Gastrocnemius medialis (tissue), 4 donors: ENCODE measurements at regions of chr9 and their contacts with region 1.

Region 1: GRCh38 chr9:128927731-128928411 is 7.1 kb downstream of the PHYHD1 start:
- DNase-seq: peak in 1 of 2 donors; percentile 50
- ATAC-seq: peak; percentile 68 to 81
- H3K4me3 ChIP-seq: no peak overlapping the region
- H3K27ac ChIP-seq: peak overlapping the region in 3 of 4 donors; percentile 32 to 44 (median 33)
- H3K4me1 ChIP-seq: peaks cover 7 to 10% of the 10 kb centered on the region in 2 donors
- H3K27me3 ChIP-seq: no peaks in the 10 kb centered on the region
- CTCF ChIP-seq: peak; percentile 75 to 93 (median 91)
- POLR2A ChIP-seq: no peak

Region 2: DNA sequence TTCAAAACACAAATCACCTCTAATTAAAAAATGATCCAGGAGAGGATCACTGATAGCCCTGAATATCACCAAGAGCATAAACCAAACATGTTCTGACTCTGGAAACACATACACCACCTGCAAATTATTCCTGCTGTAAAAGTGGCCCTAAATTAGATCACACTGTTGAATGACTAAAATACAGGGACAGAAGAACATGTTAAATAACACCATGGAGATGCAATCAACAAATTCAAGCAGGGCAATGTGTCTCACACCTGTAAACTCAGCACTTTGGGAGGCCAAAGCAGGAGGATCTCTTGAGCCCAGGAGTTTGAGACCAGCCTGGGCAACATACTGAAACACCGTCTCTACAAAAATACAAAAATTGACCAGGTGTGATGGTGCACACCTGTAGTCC is 80.1 kb before region 1 on chr9:
- in situ Hi-C with region 1: no loop called
- intact Hi-C with region 1: loop called (anchors 1 kb)
- DNase-seq: no peak
- ATAC-seq: no peak
- H3K4me3 ChIP-seq: no peak overlapping the region
- H3K27ac ChIP-seq: no peak overlapping the region
- H3K4me1 ChIP-seq: peaks cover 0 to 6% of the 10 kb centered on the region in 2 donors
- H3K27me3 ChIP-seq: no peaks in the 10 kb centered on the region
- CTCF ChIP-seq: no peak
- POLR2A ChIP-seq: no peak

Region 3: DNA sequence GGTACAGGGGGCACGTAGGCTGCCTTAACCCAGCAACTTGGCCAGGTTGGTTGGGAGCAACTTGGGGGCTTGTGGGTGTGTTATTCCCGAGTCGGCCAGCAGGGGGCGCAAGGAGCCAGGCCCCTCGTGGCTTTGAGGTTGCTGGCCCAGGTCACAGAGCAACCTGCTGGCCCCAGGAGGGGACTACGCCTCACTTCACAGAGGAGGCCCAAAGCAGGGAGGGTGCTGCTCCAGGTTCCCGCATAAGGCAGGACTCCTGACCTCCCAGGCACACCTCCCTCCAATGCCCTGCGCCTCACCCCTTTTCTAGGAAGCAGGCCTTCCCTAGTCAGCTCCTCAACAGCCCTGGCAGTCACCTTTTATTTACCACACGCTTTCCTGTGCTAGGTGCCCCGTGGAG is 64.2 kb before region 1 on chr9:
- in situ Hi-C with region 1: loop called (anchors 5 kb)
- intact Hi-C with region 1: loop called (anchors 1 kb)
- DNase-seq: peak; percentile 32 to 69
- ATAC-seq: peak; percentile 40 to 45
- H3K4me3 ChIP-seq: no peak overlapping the region
- H3K27ac ChIP-seq: peak overlapping the region in 2 of 4 donors; percentile 81 to 84
- H3K4me1 ChIP-seq: peaks cover 33 to 34% of the 10 kb centered on the region in 2 donors
- H3K27me3 ChIP-seq: no peaks in the 10 kb centered on the region
- CTCF ChIP-seq: peak; percentile 84 to 97 (median 93)
- POLR2A ChIP-seq: no peak

Region 4: DNA sequence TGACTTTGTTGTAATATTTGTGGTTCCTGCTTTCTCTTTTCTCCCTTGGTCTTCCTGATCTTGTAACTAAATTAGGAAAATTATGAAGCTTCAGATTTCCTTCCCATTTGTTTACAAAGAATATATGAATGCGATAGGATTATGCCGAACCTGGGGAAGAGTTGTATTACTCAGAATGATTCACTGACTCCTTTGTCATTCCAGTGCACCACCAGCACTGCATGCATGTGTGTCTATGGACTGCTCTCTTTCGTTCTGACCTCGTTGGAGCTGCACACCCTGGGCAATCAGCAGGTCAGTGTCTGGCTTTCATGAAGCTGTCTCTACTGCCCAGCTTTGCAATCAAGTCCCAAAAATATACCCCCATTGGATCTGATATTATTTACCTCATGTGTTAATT is 45.1 kb after region 1 on chr9:
- in situ Hi-C with region 1: no loop called
- intact Hi-C with region 1: no loop called
- DNase-seq: no peak
- ATAC-seq: no peak
- H3K4me3 ChIP-seq: no peak overlapping the region
- H3K27ac ChIP-seq: no peak overlapping the region
- H3K4me1 ChIP-seq: no peaks in the 10 kb centered on the region
- H3K27me3 ChIP-seq: no peaks in the 10 kb centered on the region
- CTCF ChIP-seq: no peak
- POLR2A ChIP-seq: no peak